Vagina (tissue), 2 donors: ENCODE measurements at regions of chr7 and their contacts with region 1.

Region 1: DNA sequence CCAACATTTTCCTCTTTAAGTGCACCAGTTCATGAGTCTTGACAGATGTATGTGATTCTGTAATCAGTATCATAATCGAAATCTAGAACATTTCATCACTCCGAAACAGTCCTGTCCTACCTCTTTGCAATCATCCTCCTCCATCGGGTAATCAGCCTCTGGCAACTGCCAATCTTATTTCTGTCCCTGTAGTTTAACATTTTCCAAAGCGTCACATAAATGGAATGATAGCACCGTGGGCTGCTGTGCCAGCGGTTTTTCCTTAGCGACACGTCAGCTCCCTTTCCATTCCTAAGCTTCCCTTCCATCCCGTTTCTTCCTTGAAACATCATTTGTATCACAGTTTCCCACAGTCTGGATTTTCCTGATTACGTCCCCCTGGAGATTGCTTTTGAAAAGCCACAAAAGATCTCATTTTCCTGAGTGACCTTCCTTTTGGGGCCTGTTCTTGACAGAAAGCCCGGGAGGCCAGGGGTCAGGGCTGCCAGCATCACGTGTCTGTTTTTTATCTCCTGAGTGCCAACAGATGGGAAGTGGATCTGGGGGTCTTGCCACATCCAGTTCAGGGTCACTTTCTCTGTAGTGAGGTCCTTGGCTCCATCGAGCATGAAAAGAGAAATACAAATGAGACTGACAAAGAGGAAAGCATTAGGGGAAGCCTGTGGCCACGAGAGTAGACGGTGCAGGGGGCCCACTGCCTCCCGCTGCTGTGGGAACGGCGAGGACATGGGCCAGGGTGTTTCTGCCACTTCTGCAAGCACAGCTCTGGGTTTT is 31.6 kb downstream of the TMEM120A start:
- DNase-seq: no peak
- H3K4me3 ChIP-seq: no peak overlapping the region
- H3K27ac ChIP-seq: peak overlapping the region; percentile 77
- H3K4me1 ChIP-seq: peaks cover 44% of the 10 kb centered on the region
- H3K27me3 ChIP-seq: no peaks in the 10 kb centered on the region
- CTCF ChIP-seq: no peak
- POLR2A ChIP-seq: no peak

Region 2: DNA sequence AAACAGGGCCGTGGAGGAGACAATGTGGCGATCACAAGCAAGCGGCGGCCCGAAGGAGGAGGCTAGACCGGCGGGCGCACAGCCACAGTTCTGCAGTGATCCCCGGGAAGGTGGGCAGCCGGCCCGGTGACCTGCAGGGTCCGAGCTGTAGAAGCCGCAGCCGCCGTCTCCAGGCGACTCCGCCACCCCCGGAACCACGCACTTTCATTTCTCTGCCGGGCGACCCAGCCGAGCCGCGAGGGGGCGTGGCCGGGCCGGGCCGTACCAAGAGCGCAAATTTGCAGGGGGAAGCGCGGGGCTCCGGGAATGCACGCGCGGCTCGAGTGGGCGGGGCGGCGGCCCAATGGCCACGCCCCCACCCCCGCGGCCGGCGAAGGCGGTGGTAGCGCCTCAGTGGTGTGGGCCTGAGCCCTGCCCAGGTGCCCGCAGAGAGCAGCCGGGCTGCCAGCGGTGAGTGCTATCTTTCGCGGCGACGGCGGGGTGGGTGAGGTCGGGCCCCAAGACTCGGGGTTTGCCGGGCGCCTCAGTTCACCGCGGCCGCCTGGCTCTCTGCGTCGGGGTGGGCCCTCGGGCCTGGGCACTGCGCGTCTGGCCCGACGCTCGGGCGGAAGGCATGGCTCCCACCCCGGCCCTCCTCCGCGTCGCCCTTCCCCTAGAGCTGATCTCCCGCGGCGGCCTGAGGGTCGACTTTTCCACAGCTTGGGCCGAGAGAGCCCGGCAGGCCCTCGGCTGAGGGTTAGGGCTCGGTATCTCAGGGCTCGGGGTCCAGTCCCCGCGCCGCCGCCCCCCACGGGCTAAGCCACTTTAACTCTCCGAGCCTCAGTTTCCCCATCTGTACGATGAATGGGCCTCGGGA is 47.8 kb before region 1 on chr7 and contains the start of gene POR:
- intact Hi-C with region 1: loop called (anchors 5 kb)
- DNase-seq: peak in 1 of 2 donors; percentile 96
- H3K4me3 ChIP-seq: peak within 1 kb of the TSS; percentile 80 to 94
- H3K27ac ChIP-seq: peak within 1 kb of the TSS; percentile 85
- H3K4me1 ChIP-seq: peaks cover 39% of the 10 kb centered on the region
- H3K27me3 ChIP-seq: no peaks in the 10 kb centered on the region
- CTCF ChIP-seq: peak in 2 of 3 experiments; percentile 2 to 11
- POLR2A ChIP-seq: peak; percentile 73 to 95
- total RNA-seq, gene POR: 94.3 TPM